ENCODE measurements at regions of chr1 and their contacts with region 1.

Region 1: GRCh38 chr1:114428083-114428749 is 82.8 kb downstream of the TRIM33 start:
- DNase-seq: peak; percentile 14 to 39 (median 19)
- H3K4me3 ChIP-seq: no peak overlapping the region
- H3K4me3 Mint-ChIP-seq: no peak overlapping the region
- H3K27ac ChIP-seq: no peak overlapping the region
- H3K27ac Mint-ChIP-seq: peak overlapping the region in 1 of 7 donors; percentile 65
- H3K4me1 ChIP-seq: no peaks in the 10 kb centered on the region
- H3K4me1 Mint-ChIP-seq: no peaks in the 10 kb centered on the region
- H3K27me3 ChIP-seq: no peaks in the 10 kb centered on the region
- H3K27me3 Mint-ChIP-seq: no peaks in the 10 kb centered on the region

Region 2: GRCh38 chr1:113978863-113979702 is 449.1 kb before region 1 on chr1 and contains the start of gene OLFML3:
- CTCF ChIA-PET with region 1: interaction called, 8 read pairs
- POLR2A ChIA-PET with region 1: no interaction called
- intact Hi-C with region 1: loop called (anchors 5 kb)
- DNase-seq: peak in 3 of 5 donors; percentile 17 to 27 (median 22)
- H3K4me3 ChIP-seq: no peak within 1 kb of the TSS
- H3K4me3 Mint-ChIP-seq: peak within 1 kb of the TSS in 1 of 8 donors; percentile 17
- H3K27ac ChIP-seq: no peak within 1 kb of the TSS
- H3K27ac Mint-ChIP-seq: peak within 1 kb of the TSS in 5 of 7 donors; percentile 30 to 67 (median 50)
- H3K4me1 ChIP-seq: no peaks in the 10 kb centered on the region
- H3K4me1 Mint-ChIP-seq: peaks cover 11 to 41% (median 27%) of the 10 kb centered on the region in 4 donors
- H3K27me3 ChIP-seq: no peaks in the 10 kb centered on the region
- H3K27me3 Mint-ChIP-seq: no peaks in the 10 kb centered on the region
- total RNA-seq, gene OLFML3: 0.42 to 0.70 TPM

Region 3: DNA sequence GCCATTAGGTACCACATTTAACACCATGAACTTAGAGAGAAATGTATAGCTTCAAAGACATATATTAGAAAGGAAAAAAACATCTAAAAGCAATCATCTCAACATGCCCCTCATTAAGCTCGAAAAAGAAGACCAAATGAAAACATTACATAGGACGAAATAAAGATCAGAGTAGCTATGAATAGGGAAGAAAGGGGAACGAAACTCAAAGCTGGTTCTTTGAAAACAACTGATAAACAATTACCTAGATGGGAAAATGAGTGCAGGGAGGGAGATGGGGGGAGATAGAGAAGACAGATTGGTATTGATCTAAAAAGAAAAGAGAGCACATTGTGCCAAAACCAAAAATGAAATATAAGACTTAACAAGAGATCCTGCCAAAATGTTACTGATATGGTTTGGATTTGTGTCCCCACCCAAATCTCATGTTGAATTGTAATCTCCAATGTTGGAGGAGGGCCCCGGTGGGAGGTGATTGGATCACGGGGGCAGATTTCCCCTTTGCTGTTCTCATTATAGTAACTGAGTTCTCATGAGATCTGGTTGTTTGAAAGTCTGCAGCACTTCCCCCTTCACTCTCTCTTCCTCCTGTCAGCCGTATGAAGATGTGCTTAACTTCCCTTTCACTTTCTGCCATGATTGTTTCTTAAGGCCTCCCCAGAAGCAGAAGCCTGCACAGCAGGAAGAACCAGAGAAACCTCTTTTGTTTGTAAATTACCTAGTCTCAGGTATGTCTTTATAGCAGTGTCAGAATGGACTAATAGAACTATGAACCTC is 54.2 kb after region 1 on chr1:
- CTCF ChIA-PET with region 1: no interaction called
- POLR2A ChIA-PET with region 1: no interaction called
- intact Hi-C with region 1: loop called (anchors 10 kb)
- DNase-seq: peak in 4 of 5 donors; percentile 21 to 28 (median 26)
- H3K4me3 ChIP-seq: no peak overlapping the region
- H3K4me3 Mint-ChIP-seq: peak overlapping the region in 7 of 8 donors; percentile 15 to 72 (median 26)
- H3K27ac ChIP-seq: no peak overlapping the region
- H3K27ac Mint-ChIP-seq: peak overlapping the region; percentile 62 to 92 (median 82)
- H3K4me1 ChIP-seq: peaks cover 46% of the 10 kb centered on the region
- H3K4me1 Mint-ChIP-seq: peaks cover 41 to 68% (median 49%) of the 10 kb centered on the region in 4 donors
- H3K27me3 ChIP-seq: no peaks in the 10 kb centered on the region
- H3K27me3 Mint-ChIP-seq: no peaks in the 10 kb centered on the region

Region 4: DNA sequence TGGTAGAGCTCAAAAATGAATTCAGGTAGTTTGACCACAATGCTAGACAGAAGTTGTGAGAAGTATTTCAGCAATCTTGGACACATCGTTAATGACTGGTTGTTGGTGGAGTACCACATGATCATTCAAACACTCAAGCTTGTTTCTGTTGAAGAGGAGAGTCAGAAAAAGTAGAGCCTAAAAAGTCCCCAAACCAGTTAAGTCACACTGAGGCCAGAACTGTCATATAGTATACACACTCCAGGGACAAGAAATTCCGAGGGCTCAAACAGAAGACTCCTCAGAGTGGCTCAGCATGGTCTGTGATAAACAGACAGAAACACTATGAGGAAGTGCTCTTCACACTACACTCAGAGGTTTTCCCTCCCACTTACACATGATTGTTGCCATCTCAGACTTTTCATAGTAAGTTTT is 76.9 kb after region 1 on chr1:
- CTCF ChIA-PET with region 1: no interaction called
- POLR2A ChIA-PET with region 1: no interaction called
- intact Hi-C with region 1: no loop called
- DNase-seq: no peak
- H3K4me3 ChIP-seq: no peak overlapping the region
- H3K4me3 Mint-ChIP-seq: peak overlapping the region in 2 of 8 donors; percentile 1 to 2
- H3K27ac ChIP-seq: no peak overlapping the region
- H3K27ac Mint-ChIP-seq: peak overlapping the region in 2 of 7 donors; percentile 44 to 76
- H3K4me1 ChIP-seq: peaks cover 71% of the 10 kb centered on the region
- H3K4me1 Mint-ChIP-seq: peaks cover 58 to 82% (median 68%) of the 10 kb centered on the region in 4 donors
- H3K27me3 ChIP-seq: no peaks in the 10 kb centered on the region
- H3K27me3 Mint-ChIP-seq: no peaks in the 10 kb centered on the region